Natural killer cell (primary cell): ENCODE measurements at regions of chr16 and their contacts with region 1.

Region 1: DNA sequence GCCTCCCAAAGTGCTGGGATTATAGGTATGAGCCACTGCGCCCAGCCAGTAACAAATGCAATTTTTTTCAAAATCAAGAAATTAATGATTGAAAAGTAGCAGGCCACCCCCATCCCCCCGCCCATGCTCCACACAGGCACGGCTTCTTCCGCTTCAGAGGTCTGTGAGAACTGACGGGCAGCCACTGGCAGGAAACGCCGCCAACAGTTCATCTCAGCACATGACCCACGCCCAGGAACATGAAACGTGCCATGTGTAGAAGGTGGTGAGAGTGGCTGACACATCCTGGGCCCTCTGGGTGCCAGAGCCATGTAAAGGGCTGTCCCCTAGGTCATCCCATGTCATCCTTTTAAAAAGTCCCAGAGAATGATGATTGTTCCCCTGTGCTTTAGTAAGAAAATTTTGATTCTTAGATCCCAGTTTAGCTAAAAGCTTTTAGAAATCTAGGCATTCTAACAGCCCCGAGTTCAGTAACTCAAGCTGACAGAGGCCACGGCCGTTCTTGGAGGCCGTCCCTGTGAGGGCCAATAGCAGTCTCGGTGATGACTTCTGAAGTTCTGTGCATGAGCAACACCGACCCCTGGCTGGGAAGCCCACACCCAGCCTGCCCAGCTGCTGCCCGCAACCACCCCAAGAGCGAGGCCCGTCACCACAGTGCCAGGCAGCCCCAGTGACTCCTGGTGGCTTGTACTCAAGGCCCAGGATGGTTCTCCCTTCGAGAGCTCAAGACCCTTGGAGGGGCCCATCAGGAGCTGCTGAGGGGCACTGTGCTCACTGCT is 52.1 kb downstream of the KLHDC4 start:
- DNase-seq: peak; percentile 67 to 75
- ATAC-seq: peak; percentile 90 to 93 (median 91)
- H3K4me3 ChIP-seq: no peak overlapping the region
- H3K4me3 Mint-ChIP-seq: peak overlapping the region; percentile 68
- H3K27ac ChIP-seq: peak overlapping the region; percentile 87
- H3K27ac Mint-ChIP-seq: peak overlapping the region; percentile 91 to 96
- H3K4me1 ChIP-seq: peaks cover 35% of the 10 kb centered on the region
- H3K4me1 Mint-ChIP-seq: peaks cover 42 to 46% of the 10 kb centered on the region in 2 donors
- H3K27me3 ChIP-seq: no peaks in the 10 kb centered on the region
- H3K27me3 Mint-ChIP-seq: no peaks in the 10 kb centered on the region
- CTCF ChIP-seq: no peak

Region 2: GRCh38 chr16:87725596-87726235 is 12.1 kb after region 1 on chr16:
- intact Hi-C with region 1: loop called (anchors 1 kb)
- DNase-seq: peak; percentile 24 to 25
- ATAC-seq: peak; percentile 10 to 30 (median 21)
- H3K4me3 ChIP-seq: no peak overlapping the region
- H3K4me3 Mint-ChIP-seq: peak overlapping the region; percentile 77
- H3K27ac ChIP-seq: peak overlapping the region; percentile 97
- H3K27ac Mint-ChIP-seq: peak overlapping the region; percentile 97 to 99
- H3K4me1 ChIP-seq: peaks cover 46% of the 10 kb centered on the region
- H3K4me1 Mint-ChIP-seq: peaks cover 57 to 58% of the 10 kb centered on the region in 2 donors
- H3K27me3 ChIP-seq: no peaks in the 10 kb centered on the region
- H3K27me3 Mint-ChIP-seq: no peaks in the 10 kb centered on the region
- CTCF ChIP-seq: no peak